Heart right ventricle (tissue), 16 donors: ENCODE measurements at regions of chr12 and their contacts with region 1.

Region 1: GRCh38 chr12:16175840-16176239 is 101.6 kb downstream of the SLC15A5 start:
- DNase-seq: no peak
- ATAC-seq: peak in 3 of 8 donors; percentile 52 to 63 (median 53)
- H3K4me3 ChIP-seq: no peak overlapping the region
- H3K27ac ChIP-seq: no peak overlapping the region
- H3K4me1 ChIP-seq: no peaks in the 10 kb centered on the region
- H3K27me3 ChIP-seq: no peaks in the 10 kb centered on the region
- CTCF ChIP-seq: no peak

Region 2: GRCh38 chr12:15996254-15996653 is 179.6 kb before region 1 on chr12:
- intact Hi-C with region 1: no loop called
- DNase-seq: peak in 1 of 2 donors; percentile 44
- ATAC-seq: peak; percentile 79 to 98 (median 88)
- H3K4me3 ChIP-seq: no peak overlapping the region
- H3K27ac ChIP-seq: no peak overlapping the region
- H3K4me1 ChIP-seq: peaks cover 0 to 13% (median 3%) of the 10 kb centered on the region in 9 donors
- H3K27me3 ChIP-seq: no peaks in the 10 kb centered on the region
- CTCF ChIP-seq: peak in 6 of 9 donors; percentile 7 to 46 (median 35)

Region 3: GRCh38 chr12:16130343-16130742 is 45.5 kb before region 1 on chr12:
- intact Hi-C with region 1: no loop called
- DNase-seq: no peak
- ATAC-seq: no peak
- H3K4me3 ChIP-seq: no peak overlapping the region
- H3K27ac ChIP-seq: no peak overlapping the region
- H3K4me1 ChIP-seq: no peaks in the 10 kb centered on the region
- H3K27me3 ChIP-seq: no peaks in the 10 kb centered on the region
- CTCF ChIP-seq: no peak

Region 4: GRCh38 chr12:16300122-16300521 is 124.3 kb after region 1 on chr12:
- intact Hi-C with region 1: loop called in 1 of 10 experiments (anchors 10 kb)
- DNase-seq: no peak
- ATAC-seq: peak in 4 of 8 donors; percentile 58 to 69 (median 61)
- H3K4me3 ChIP-seq: no peak overlapping the region
- H3K27ac ChIP-seq: peak overlapping the region in 7 of 10 donors; percentile 8 to 77 (median 56)
- H3K4me1 ChIP-seq: no peaks in the 10 kb centered on the region
- H3K27me3 ChIP-seq: no peaks in the 10 kb centered on the region
- CTCF ChIP-seq: no peak

Region 5: GRCh38 chr12:17079251-17079909 is 903.5 kb after region 1 on chr12:
- intact Hi-C with region 1: no loop called
- DNase-seq: no peak
- ATAC-seq: no peak
- H3K4me3 ChIP-seq: no peak overlapping the region
- H3K27ac ChIP-seq: no peak overlapping the region
- H3K4me1 ChIP-seq: no peaks in the 10 kb centered on the region
- H3K27me3 ChIP-seq: no peaks in the 10 kb centered on the region
- CTCF ChIP-seq: no peak